A673 (cell line): ENCODE measurements at regions of chr4 and their contacts with region 1.

Region 1: DNA sequence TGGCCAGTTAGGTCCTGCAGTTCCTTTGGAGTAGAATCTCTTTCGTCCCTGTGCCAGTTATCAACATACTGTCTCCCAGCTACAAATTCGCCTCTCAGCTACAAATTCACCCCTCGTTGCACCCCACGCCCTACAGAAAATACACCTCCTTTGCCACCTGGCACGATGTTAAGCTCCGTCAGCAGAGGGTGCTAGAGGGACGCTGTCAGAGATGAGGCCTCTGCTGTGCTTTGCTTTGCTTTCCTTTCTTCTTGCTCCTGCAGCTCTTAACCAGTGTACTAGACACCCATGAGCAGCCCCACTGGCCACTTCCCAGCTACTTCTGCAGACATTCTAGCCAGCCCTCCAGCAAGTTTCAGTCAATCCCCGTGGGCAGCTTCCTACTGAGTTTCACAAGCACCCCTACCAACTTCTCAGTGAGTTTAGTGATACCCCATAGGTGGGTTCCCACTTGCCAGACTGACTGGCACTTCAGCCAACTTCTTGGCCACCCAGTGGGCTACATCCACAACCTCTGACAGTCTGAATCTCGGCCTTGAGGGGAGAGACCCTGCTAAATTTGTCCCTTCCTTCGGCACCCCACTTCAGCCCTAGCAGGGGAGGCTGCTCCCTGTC is 21.8 kb downstream of the HAUS3 start:
- DNase-seq: peak; percentile 75
- H3K4me3 ChIP-seq: no peak overlapping the region
- H3K27ac ChIP-seq: no peak overlapping the region
- H3K4me1 ChIP-seq: no peaks in the 10 kb centered on the region
- H3K27me3 ChIP-seq: no peaks in the 10 kb centered on the region
- CTCF ChIP-seq: peak; percentile 91

Region 2: DNA sequence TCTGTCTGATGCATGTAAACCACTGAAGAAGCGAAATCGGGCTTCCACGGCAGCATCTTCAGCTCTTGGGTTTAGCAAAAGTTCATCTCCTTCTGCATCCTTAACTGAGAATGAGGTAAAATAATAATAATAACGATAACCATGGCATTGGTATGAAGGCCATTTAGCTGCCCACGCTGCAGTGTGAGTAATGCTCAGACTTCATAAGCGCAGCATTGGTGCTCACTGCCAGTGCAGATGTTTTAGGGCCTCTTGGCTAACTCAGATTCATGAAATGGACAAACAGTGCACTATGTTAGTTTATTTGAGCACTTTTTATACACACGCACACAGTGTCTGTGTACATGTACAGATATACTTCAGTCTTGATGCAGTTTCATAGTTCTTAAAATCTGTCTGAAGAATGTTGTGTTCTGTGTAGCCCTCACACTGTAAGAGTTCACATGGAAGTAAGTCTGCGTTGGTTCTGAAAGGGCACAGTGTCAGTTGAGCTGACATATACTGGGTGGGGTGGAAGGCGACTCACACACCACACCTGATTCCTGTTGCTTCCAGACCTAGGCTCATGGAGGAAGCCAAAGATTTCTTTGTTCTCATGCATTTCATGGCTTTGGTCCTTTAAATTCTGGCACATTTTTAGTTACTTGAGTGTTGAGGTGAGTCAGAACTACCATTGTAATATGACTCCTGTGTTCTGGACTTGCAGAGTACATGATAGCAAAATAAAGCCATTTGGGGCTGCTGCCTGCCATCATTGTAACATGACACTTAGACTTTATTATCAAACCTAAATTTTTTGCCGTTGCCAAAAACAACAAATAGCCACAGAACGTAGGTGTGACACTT is 280.2 kb before region 1 on chr4:
- CTCF ChIA-PET with region 1: no interaction called
- POLR2A ChIA-PET with region 1: no interaction called
- intact Hi-C with region 1: no loop called
- DNase-seq: peak; percentile 17
- H3K4me3 ChIP-seq: no peak overlapping the region
- H3K27ac ChIP-seq: no peak overlapping the region
- H3K4me1 ChIP-seq: peaks cover 3% of the 10 kb centered on the region
- H3K27me3 ChIP-seq: no peaks in the 10 kb centered on the region
- CTCF ChIP-seq: no peak

Region 3: GRCh38 chr4:2290974-2291704 is 71.0 kb after region 1 on chr4:
- CTCF ChIA-PET with region 1: no interaction called
- POLR2A ChIA-PET with region 1: no interaction called
- intact Hi-C with region 1: no loop called
- DNase-seq: no peak
- H3K4me3 ChIP-seq: no peak overlapping the region
- H3K27ac ChIP-seq: no peak overlapping the region
- H3K4me1 ChIP-seq: peaks cover 9% of the 10 kb centered on the region
- H3K27me3 ChIP-seq: no peaks in the 10 kb centered on the region
- CTCF ChIP-seq: no peak

Region 4: GRCh38 chr4:2354118-2354517 is 134.0 kb after region 1 on chr4:
- CTCF ChIA-PET with region 1: interaction called, 6 read pairs
- POLR2A ChIA-PET with region 1: no interaction called
- intact Hi-C with region 1: loop called (anchors 10 kb)
- DNase-seq: peak; percentile 24
- H3K4me3 ChIP-seq: no peak overlapping the region
- H3K27ac ChIP-seq: no peak overlapping the region
- H3K4me1 ChIP-seq: no peaks in the 10 kb centered on the region
- H3K27me3 ChIP-seq: no peaks in the 10 kb centered on the region
- CTCF ChIP-seq: peak; percentile 46